Natural killer cell (primary cell): ENCODE measurements at regions of chr3 and their contacts with region 1.

Region 1: GRCh38 chr3:184289426-184289938 is 9.6 kb upstream of the PSMD2 start:
- DNase-seq: peak; percentile 28 to 71
- ATAC-seq: peak; percentile 53 to 63 (median 62)
- H3K4me3 ChIP-seq: no peak overlapping the region
- H3K4me3 Mint-ChIP-seq: no peak overlapping the region
- H3K27ac ChIP-seq: no peak overlapping the region
- H3K27ac Mint-ChIP-seq: no peak overlapping the region
- H3K4me1 ChIP-seq: no peaks in the 10 kb centered on the region
- H3K4me1 Mint-ChIP-seq: no peaks in the 10 kb centered on the region
- H3K27me3 ChIP-seq: no peaks in the 10 kb centered on the region
- H3K27me3 Mint-ChIP-seq: peaks cover 14 to 20% of the 10 kb centered on the region in 2 donors
- CTCF ChIP-seq: peak; percentile 46

Region 2: GRCh38 chr3:184145111-184145524 is 144.4 kb before region 1 on chr3:
- intact Hi-C with region 1: no loop called
- DNase-seq: peak in 1 of 2 donors; percentile 62
- ATAC-seq: peak in 2 of 3 donors; percentile 38 to 40
- H3K4me3 ChIP-seq: no peak overlapping the region
- H3K4me3 Mint-ChIP-seq: no peak overlapping the region
- H3K27ac ChIP-seq: no peak overlapping the region
- H3K27ac Mint-ChIP-seq: no peak overlapping the region
- H3K4me1 ChIP-seq: no peaks in the 10 kb centered on the region
- H3K4me1 Mint-ChIP-seq: peaks cover 0 to 5% of the 10 kb centered on the region in 2 donors
- H3K27me3 ChIP-seq: no peaks in the 10 kb centered on the region
- H3K27me3 Mint-ChIP-seq: no peaks in the 10 kb centered on the region
- CTCF ChIP-seq: no peak

Region 3: DNA sequence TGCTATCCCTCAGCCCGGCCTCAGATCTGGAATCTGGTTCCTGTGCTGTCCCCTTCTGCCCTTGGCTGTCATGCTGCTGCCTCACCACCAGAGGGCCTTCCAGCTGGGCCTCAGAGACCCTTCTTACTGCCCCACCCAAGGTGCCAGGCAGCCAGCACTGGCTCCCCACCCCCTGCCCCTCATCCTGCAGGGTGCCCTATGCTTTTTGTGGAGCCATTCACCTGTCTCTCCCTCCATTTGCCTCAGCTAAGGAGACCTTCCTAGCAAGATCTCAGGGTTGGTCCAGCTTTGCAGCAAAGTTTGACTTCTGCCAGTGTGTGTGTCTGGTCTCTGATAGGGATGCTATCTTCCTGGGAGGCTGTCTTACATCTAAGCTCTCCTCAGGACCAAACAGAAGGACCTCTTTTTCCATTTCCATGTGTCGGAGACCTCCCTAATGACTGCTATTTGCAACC is 62.0 kb before region 1 on chr3:
- intact Hi-C with region 1: loop called (anchors 2 kb)
- DNase-seq: peak; percentile 36 to 78
- ATAC-seq: peak; percentile 43 to 45 (median 44)
- H3K4me3 ChIP-seq: no peak overlapping the region
- H3K4me3 Mint-ChIP-seq: peak overlapping the region; percentile 0
- H3K27ac ChIP-seq: no peak overlapping the region
- H3K27ac Mint-ChIP-seq: no peak overlapping the region
- H3K4me1 ChIP-seq: peaks cover 19% of the 10 kb centered on the region
- H3K4me1 Mint-ChIP-seq: peaks cover 10 to 13% of the 10 kb centered on the region in 2 donors
- H3K27me3 ChIP-seq: peaks cover 20% of the 10 kb centered on the region
- H3K27me3 Mint-ChIP-seq: peaks cover 34 to 48% of the 10 kb centered on the region in 2 donors
- CTCF ChIP-seq: peak; percentile 89

Region 4: GRCh38 chr3:184275961-184276910 is 13.2 kb before region 1 on chr3 and contains the start of gene ECE2:
- intact Hi-C with region 1: no loop called
- DNase-seq: no peak
- ATAC-seq: no peak
- H3K4me3 ChIP-seq: no peak within 1 kb of the TSS
- H3K4me3 Mint-ChIP-seq: no peak within 1 kb of the TSS
- H3K27ac ChIP-seq: no peak within 1 kb of the TSS
- H3K27ac Mint-ChIP-seq: no peak within 1 kb of the TSS
- H3K4me1 ChIP-seq: no peaks in the 10 kb centered on the region
- H3K4me1 Mint-ChIP-seq: peaks cover 0 to 6% of the 10 kb centered on the region in 2 donors
- H3K27me3 ChIP-seq: peaks cover 19% of the 10 kb centered on the region
- H3K27me3 Mint-ChIP-seq: peaks cover 38 to 61% of the 10 kb centered on the region in 2 donors
- CTCF ChIP-seq: no peak
- total RNA-seq, gene ECE2: not detected